PC-9 (cell line): ENCODE measurements at regions of chr12 and their contacts with region 1.

Region 1: GRCh38 chr12:82781309-82781997 is 94.7 kb downstream of the TMTC2 start:
- DNase-seq: no peak
- H3K4me3 ChIP-seq: no peak overlapping the region
- H3K27ac ChIP-seq: no peak overlapping the region
- H3K4me1 ChIP-seq: no peaks in the 10 kb centered on the region
- H3K27me3 ChIP-seq: no peaks in the 10 kb centered on the region
- CTCF ChIP-seq: no peak

Region 2: DNA sequence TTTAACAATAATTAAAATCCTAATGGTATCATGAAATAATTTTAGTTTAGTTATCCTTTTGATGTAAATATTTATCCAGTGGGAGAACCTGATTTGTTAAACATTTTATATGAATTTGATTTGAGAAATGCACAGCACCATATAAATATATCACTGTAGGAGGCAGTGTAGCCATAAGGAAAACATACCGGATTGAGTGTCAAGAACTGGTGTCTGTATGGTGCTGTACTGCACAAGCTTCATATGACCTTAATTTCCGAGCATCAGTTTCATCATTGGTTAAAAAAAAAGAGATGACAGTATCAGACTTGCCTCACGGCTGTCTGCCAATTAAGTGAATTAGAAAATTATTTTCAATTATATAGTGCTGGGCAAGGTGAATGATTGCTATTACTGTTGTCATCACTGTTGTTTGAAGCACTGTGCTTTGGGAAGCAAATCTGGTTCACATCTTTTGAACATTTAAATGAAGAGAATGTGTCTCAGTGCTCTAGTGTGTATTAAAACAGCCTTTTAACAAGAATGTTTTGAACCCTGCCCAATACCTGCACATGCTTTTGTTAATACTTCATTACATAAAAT is 22.6 kb before region 1 on chr12:
- CTCF ChIA-PET with region 1: no interaction called
- POLR2A ChIA-PET with region 1: no interaction called
- intact Hi-C with region 1: no loop called
- DNase-seq: no peak
- H3K4me3 ChIP-seq: no peak overlapping the region
- H3K27ac ChIP-seq: no peak overlapping the region
- H3K4me1 ChIP-seq: no peaks in the 10 kb centered on the region
- H3K27me3 ChIP-seq: no peaks in the 10 kb centered on the region
- CTCF ChIP-seq: no peak

Region 3: DNA sequence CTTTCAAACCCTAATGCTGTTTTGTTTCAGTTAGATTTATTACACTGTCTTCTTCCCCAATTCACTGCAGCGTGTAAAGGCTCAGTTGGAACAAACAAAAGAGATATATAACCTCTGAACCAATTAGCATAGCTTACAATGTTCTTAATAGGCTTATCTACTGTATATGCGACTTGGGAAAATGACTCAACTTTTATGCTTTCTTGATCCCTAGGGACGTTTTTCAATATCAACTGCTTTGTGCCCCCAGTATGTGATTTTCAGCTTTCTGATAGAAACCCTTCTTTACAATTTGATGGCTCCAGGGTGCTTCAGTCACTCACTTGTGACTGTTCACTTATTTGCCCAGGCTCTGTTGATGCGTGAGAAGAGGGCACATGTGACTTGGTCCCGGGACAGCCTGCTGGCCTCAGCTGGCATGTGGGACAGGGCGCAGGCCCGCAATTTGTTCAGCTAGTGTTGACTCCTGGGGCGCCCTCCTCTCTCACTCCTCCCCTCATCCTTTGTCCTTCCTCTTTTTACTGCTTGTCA is 12.4 kb after region 1 on chr12:
- CTCF ChIA-PET with region 1: interaction called, 10 read pairs
- POLR2A ChIA-PET with region 1: no interaction called
- intact Hi-C with region 1: no loop called
- DNase-seq: no peak
- H3K4me3 ChIP-seq: no peak overlapping the region
- H3K27ac ChIP-seq: no peak overlapping the region
- H3K4me1 ChIP-seq: no peaks in the 10 kb centered on the region
- H3K27me3 ChIP-seq: no peaks in the 10 kb centered on the region
- CTCF ChIP-seq: no peak

Region 4: GRCh38 chr12:83245156-83245555 is 463.7 kb after region 1 on chr12:
- CTCF ChIA-PET with region 1: no interaction called
- POLR2A ChIA-PET with region 1: no interaction called
- intact Hi-C with region 1: no loop called
- DNase-seq: no peak
- H3K4me3 ChIP-seq: no peak overlapping the region
- H3K27ac ChIP-seq: no peak overlapping the region
- H3K4me1 ChIP-seq: no peaks in the 10 kb centered on the region
- H3K27me3 ChIP-seq: no peaks in the 10 kb centered on the region
- CTCF ChIP-seq: no peak